Activated T-helper 2 cell treated with anti-CD3 and anti-CD28 coated beads, Interferon-gamma antibody, Interleukin-2, Interleukin-4, amounts not matched to agents 10 μg/mL and 5 μg/mL and 100 μg/mL, durations not matched to agents 14 hours and 24 hours and 36 hours (primary cell): ENCODE measurements at regions of chr1 and their contacts with region 1.

Region 1: DNA sequence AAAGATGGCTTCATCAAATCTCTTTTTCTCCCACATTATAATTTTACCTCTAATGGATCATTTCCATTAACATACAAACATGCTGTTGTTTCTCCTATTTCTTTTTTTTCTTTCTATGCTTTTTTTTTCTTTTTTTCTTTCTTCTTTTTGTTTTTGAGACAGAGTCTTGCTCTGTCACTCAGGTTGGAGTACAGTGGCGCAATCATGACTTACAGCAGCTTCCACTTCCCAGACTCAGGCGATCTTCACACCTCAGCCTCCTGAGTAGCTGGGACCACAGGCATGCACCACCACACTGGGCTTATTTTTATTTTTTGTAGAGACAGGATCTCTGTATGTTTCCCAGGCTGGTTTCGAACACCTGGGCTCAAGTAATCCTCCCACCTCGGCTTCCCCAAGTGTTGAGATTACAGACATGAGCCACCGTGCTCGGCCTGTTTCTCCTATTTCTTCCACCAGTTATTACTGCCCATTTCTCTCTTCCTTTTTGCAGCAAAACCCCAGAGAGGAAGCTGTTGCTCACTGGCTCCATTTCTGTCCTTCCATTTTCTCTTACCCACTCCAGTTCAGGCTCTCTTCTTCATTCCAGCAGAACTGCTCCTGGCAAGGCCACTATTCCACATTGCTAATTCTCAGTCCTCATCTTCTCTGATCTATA is 32.1 kb upstream of the OPRD1 start:
- DNase-seq: no peak
- H3K4me3 Mint-ChIP-seq: no peak overlapping the region
- H3K27ac Mint-ChIP-seq: no peak overlapping the region
- H3K4me1 Mint-ChIP-seq: peaks cover 2% of the 10 kb centered on the region
- H3K27me3 Mint-ChIP-seq: peaks cover 2% of the 10 kb centered on the region

Region 2: GRCh38 chr1:28494737-28495136 is 285.1 kb before region 1 on chr1:
- intact Hi-C with region 1: no loop called
- DNase-seq: no peak
- H3K4me3 Mint-ChIP-seq: no peak overlapping the region
- H3K27ac Mint-ChIP-seq: peak overlapping the region; percentile 44
- H3K4me1 Mint-ChIP-seq: peaks cover 6% of the 10 kb centered on the region
- H3K27me3 Mint-ChIP-seq: no peaks in the 10 kb centered on the region

Region 3: GRCh38 chr1:28877132-28877781 is 97.4 kb after region 1 on chr1:
- intact Hi-C with region 1: loop called (anchors 1 kb)
- DNase-seq: peak; percentile 58
- H3K4me3 Mint-ChIP-seq: no peak overlapping the region
- H3K27ac Mint-ChIP-seq: no peak overlapping the region
- H3K4me1 Mint-ChIP-seq: peaks cover 3% of the 10 kb centered on the region
- H3K27me3 Mint-ChIP-seq: peaks cover 10% of the 10 kb centered on the region

Region 4: DNA sequence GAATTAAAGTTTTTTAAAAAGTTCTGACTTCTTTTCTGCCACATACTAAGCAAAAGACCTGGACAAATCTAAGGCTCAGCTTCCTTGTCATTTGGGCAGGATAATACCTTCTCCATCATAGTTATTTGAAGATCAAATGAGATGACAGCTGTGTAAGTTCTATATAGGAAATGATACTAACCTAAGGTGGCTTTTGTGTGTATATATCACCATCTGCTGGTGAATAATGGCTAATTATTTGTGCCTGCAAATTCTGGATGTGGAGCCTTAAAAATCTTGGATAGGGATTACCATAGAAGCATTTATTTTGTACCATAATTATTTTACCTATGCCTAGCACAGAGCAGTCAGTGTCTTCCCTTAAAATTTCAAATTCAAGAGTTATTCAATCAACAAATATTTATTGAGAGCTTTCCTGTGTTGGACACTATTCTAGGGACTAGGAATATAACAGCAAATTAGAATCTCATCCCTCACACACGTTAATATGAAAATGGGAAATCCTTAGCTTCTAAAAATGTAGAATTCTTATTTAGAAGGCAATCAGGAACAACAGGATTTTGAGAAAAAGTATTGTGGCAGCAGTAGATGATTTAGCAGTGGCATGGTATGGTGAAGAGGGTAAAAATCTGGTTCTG is 254.1 kb after region 1 on chr1:
- intact Hi-C with region 1: loop called (anchors 10 kb)
- DNase-seq: no peak
- H3K4me3 Mint-ChIP-seq: no peak overlapping the region
- H3K27ac Mint-ChIP-seq: no peak overlapping the region
- H3K4me1 Mint-ChIP-seq: no peaks in the 10 kb centered on the region
- H3K27me3 Mint-ChIP-seq: no peaks in the 10 kb centered on the region